ENCODE measurements at regions of chr12 and their contacts with region 1.

Region 1: GRCh38 chr12:25186788-25187397 is 8.1 kb downstream of the DNAI7 start:
- DNase-seq: peak in 4 of 5 donors; percentile 24 to 41 (median 28)
- H3K4me3 ChIP-seq: peak overlapping the region; percentile 48 to 49
- H3K4me3 Mint-ChIP-seq: peak overlapping the region; percentile 76 to 92 (median 86)
- H3K27ac ChIP-seq: peak overlapping the region; percentile 50
- H3K27ac Mint-ChIP-seq: peak overlapping the region; percentile 8 to 94 (median 85)
- H3K4me1 ChIP-seq: peaks cover 16% of the 10 kb centered on the region
- H3K4me1 Mint-ChIP-seq: peaks cover 8 to 16% (median 12%) of the 10 kb centered on the region in 4 donors
- H3K27me3 ChIP-seq: no peaks in the 10 kb centered on the region
- H3K27me3 Mint-ChIP-seq: no peaks in the 10 kb centered on the region

Region 2: GRCh38 chr12:25151476-25151875 is 35.4 kb before region 1 on chr12:
- CTCF ChIA-PET with region 1: interaction called, 5 read pairs
- POLR2A ChIA-PET with region 1: interaction called, 6 read pairs
- intact Hi-C with region 1: loop called (anchors 2 kb)
- DNase-seq: no peak
- H3K4me3 ChIP-seq: no peak overlapping the region
- H3K4me3 Mint-ChIP-seq: no peak overlapping the region
- H3K27ac ChIP-seq: no peak overlapping the region
- H3K27ac Mint-ChIP-seq: peak overlapping the region in 1 of 7 donors; percentile 5
- H3K4me1 ChIP-seq: peaks cover 3% of the 10 kb centered on the region
- H3K4me1 Mint-ChIP-seq: peaks cover 0 to 8% (median 6%) of the 10 kb centered on the region in 4 donors
- H3K27me3 ChIP-seq: no peaks in the 10 kb centered on the region
- H3K27me3 Mint-ChIP-seq: no peaks in the 10 kb centered on the region

Measured in CD4-positive, alpha-beta memory T cell (primary cell).